H1 (cell line): ENCODE measurements at regions of chr1 and their contacts with region 1.

Region 1: DNA sequence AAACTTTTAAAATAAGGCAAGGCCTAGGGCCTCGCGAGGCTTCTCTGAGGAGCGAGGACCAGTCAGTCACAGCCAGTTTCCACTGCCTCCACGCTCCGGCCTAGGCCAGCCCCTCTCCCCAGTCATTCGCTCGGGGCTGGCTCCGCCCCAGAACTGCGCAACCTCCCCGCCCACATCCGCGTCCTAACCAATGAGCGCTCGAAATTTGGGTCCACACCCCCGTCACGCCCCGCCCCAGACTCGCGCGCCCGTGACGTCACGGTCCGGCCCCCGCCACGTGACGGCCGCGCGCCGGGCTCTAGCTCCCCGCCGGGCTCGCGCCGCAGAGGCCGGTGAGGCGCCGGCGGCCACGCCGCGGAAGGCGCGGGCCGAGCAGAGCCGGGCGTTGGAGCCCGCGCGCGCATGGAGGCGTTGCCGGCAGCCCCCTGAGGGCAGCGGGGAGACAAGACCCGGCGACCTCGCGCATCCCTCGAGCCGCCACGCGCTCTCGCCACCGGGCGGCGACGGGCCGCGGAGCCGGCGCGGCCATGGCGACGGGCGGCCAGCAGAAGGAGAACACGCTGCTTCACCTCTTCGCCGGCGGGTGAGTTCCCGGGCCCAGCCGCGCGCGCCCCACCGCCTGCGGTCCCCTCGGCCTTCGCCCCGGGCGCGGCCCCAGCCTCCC is at the start of gene SLC25A33:
- DNase-seq: peak; percentile 81 to 99
- H3K4me3 ChIP-seq: peak within 1 kb of the TSS; percentile 89 to 93 (median 92)
- H3K27ac ChIP-seq: peak within 1 kb of the TSS; percentile 74; the same call in 1 of the 2 replicates
- H3K4me1 ChIP-seq: peaks cover 0 to 12% (median 5%) of the 10 kb centered on the region in 4 experiments; a peak in 3 of 7 replicates
- H3K27me3 ChIP-seq: no peaks in the 10 kb centered on the region
- CTCF ChIP-seq: no peak
- EP300 ChIP-seq: no peak
- POLR2A ChIP-seq: peak; percentile 87 to 93
- RAD21 ChIP-seq: no peak
- total RNA-seq, gene SLC25A33: 12.4 and 12.8 TPM in 2 replicates

Region 2: GRCh38 chr1:9553736-9554144 is 14.4 kb after region 1 on chr1:
- CTCF ChIA-PET with region 1: interaction called, 6 read pairs
- POLR2A ChIA-PET with region 1: interaction called, 12 read pairs
- DNase-seq: no peak
- H3K4me3 ChIP-seq: no peak overlapping the region
- H3K27ac ChIP-seq: no peak overlapping the region
- H3K4me1 ChIP-seq: no peaks in the 10 kb centered on the region; a peak in 1 of 7 replicates
- H3K27me3 ChIP-seq: peaks cover 0 to 7% (median 3%) of the 10 kb centered on the region in 4 experiments; a peak in 3 of 7 replicates
- CTCF ChIP-seq: no peak
- EP300 ChIP-seq: no peak
- POLR2A ChIP-seq: no peak
- RAD21 ChIP-seq: no peak